A673 (cell line): ENCODE measurements at regions of chr17 and their contacts with region 1.

Region 1: GRCh38 chr17:44070455-44071197 is at the start of gene G6PC3:
- DNase-seq: peak; percentile 93
- H3K4me3 ChIP-seq: peak within 1 kb of the TSS; percentile 59
- H3K27ac ChIP-seq: peak within 1 kb of the TSS; percentile 65
- H3K4me1 ChIP-seq: peaks cover 3% of the 10 kb centered on the region
- H3K27me3 ChIP-seq: no peaks in the 10 kb centered on the region
- CTCF ChIP-seq: no peak
- total RNA-seq, gene G6PC3: 47.0 and 57.9 TPM in 2 replicates

Region 2: DNA sequence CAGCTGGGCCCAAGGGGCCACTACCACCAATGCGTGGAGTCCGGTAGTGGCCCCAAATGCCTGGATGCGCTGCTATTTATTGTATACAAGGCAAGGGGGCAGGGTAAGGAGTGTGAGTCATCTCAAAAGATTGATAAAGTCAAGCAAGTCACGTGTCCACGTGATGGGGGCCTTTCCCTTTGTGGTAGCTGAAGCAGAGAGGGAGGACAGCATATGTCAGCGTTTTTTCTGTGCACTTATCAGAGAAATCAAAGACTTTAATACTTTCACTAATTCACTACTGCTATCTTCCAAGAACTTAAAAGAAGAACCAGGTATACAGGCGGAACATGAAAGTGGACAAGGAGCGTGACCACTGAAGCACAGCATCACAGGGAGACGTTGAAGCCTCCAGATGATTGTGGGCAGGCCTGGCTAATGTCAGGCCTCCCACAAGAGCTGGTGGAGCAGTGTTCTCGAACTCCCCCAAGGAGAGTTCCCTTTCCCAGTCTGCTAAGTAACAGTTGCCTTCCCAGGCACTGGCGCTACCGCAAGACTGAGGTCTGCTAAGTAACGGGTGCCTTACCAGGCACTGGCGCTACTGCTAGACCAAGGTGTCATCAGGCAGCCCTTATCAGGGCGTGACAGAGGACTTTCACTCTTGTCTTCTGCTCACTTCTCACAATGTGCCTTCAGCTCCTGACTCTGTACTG is 89.0 kb after region 1 on chr17:
- CTCF ChIA-PET with region 1: interaction called, 12 read pairs
- POLR2A ChIA-PET with region 1: no interaction called
- intact Hi-C with region 1: no loop called
- DNase-seq: no peak
- H3K4me3 ChIP-seq: no peak overlapping the region
- H3K27ac ChIP-seq: no peak overlapping the region
- H3K4me1 ChIP-seq: no peaks in the 10 kb centered on the region
- H3K27me3 ChIP-seq: no peaks in the 10 kb centered on the region
- CTCF ChIP-seq: no peak